Body of pancreas (tissue), 4 donors: ENCODE measurements at regions of chr11 and their contacts with region 1.

Region 1: DNA sequence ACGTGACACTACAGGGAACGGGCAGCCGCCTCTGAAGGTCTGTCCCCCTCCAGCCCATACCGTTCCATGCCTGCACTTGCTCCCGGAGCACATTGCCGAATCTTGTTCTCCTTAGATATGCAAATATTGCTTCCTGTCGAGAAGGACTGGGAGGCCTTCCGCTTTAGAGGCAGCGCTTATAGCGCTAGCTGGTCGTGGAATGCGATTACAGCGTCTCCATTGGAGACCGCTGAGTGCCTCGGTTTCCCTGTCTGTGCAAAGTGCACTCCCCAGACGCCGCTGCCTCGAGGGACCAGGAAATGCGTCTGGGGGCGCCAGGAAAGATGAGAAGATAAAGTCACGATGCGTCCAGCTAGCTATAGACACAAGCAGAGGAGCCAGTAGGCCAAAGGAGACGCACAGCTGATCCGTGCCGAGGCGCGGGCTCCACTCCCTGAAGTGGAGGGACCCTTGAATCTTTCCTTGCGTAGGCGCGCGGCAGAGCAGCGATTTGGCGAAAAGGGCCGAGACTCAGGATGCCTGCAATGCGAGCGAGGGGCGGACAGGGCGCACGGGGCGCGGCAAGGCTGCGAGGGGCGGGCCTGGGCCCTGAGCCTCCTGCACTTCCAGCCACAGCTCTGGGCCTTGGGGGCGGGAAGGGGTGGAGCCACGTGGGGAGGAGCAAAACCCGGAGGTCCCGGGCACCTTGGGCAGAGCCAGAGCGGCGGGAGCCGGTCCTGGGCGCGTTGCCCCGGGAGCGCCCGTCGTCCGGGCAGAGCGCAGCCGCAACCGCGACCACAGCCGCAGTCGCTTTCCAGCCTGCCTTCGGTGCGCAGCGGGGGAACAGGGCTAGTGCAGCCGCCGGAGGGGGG is at the start of gene RASSF10:
- DNase-seq: peak; percentile 22 to 61 (median 36)
- ATAC-seq: no peak
- H3K4me3 ChIP-seq: no peak within 1 kb of the TSS
- H3K27ac ChIP-seq: no peak within 1 kb of the TSS
- H3K4me1 ChIP-seq: peaks cover 63% of the 10 kb centered on the region
- H3K27me3 ChIP-seq: peaks cover 0 to 5% of the 10 kb centered on the region in 2 donors
- CTCF ChIP-seq: no peak
- POLR2A ChIP-seq: no peak
- total RNA-seq, gene RASSF10: not detected

Region 2: GRCh38 chr11:13052130-13052605 is 43.3 kb after region 1 on chr11:
- intact Hi-C with region 1: loop called (anchors 10 kb)
- DNase-seq: peak; percentile 41 to 68 (median 66)
- ATAC-seq: peak; percentile 95
- H3K4me3 ChIP-seq: no peak overlapping the region
- H3K27ac ChIP-seq: peak overlapping the region; percentile 35 to 56 (median 48)
- H3K4me1 ChIP-seq: peaks cover 23% of the 10 kb centered on the region
- H3K27me3 ChIP-seq: no peaks in the 10 kb centered on the region
- CTCF ChIP-seq: no peak
- POLR2A ChIP-seq: no peak